Heart left ventricle (tissue), 16 donors: ENCODE measurements at regions of chr12 and their contacts with region 1.

Region 1: DNA sequence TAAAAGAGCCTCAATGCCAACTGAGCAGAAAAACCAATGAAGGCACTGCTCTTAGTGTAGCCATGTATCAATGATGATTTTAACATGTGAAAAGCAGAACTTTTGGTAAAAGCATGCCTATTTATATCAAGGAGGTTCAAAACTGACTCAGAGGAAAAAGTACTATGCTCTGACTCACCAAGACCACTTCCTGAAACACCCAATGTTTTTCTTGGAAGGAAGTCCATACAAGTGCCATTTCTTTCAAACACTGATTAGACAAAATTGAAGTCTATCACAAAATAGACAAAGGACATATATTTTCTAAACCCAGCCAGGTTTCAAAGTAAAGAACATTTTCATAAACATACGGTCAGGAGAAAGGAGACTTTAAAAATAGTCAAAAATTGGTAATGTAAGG is 88.6 kb downstream of the EPS8 start:
- DNase-seq: no peak
- ATAC-seq: peak; percentile 63 to 91 (median 87)
- H3K4me3 ChIP-seq: no peak overlapping the region
- H3K27ac ChIP-seq: peak overlapping the region; percentile 35 to 89 (median 68)
- H3K4me1 ChIP-seq: peaks cover 0 to 73% (median 38%) of the 10 kb centered on the region in 12 donors
- H3K27me3 ChIP-seq: no peaks in the 10 kb centered on the region
- CTCF ChIP-seq: no peak
- POLR2A ChIP-seq: no peak

Region 2: DNA sequence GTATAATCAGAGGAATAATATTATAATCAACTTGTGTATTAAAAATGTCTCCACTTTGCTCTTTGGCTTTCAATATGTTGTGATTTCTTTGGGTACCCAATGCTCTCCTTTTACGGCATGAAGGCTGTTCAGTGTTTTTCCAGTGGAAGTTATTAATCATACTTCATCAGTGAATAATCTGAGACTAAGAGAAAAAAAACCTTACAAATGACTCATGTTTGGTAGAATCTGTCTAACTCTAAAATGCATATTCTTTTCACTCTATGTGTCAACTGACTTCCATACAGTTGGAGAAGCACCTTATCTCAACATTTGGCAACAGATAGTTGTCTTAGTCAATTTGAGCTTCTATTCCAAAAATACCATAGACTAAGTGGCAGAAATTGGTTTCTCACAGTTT is 296.1 kb before region 1 on chr12:
- intact Hi-C with region 1: no loop called
- DNase-seq: no peak
- ATAC-seq: no peak
- H3K4me3 ChIP-seq: no peak overlapping the region
- H3K27ac ChIP-seq: no peak overlapping the region
- H3K4me1 ChIP-seq: no peaks in the 10 kb centered on the region
- H3K27me3 ChIP-seq: no peaks in the 10 kb centered on the region
- CTCF ChIP-seq: no peak
- POLR2A ChIP-seq: no peak

Region 3: DNA sequence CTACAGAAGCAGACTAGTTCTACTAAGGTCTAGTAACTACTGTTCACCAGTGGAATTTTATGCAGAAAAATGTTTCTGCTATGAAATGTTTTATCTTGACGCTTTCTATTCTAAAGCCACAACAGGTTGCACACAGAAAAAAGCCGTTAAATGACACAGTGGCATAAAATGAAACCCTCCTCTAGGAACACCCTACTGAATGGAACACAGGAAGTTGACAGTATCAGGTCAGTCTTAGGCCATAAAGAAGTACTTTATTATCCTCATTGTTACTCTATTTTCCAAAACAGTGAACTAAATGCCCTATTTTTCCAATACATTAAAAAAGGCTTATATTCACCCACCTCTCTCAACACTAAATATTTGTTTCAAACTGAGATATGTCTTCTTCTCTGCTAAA is 66.7 kb after region 1 on chr12:
- intact Hi-C with region 1: loop called in 1 of 10 experiments (anchors 5 kb)
- DNase-seq: no peak
- ATAC-seq: no peak
- H3K4me3 ChIP-seq: no peak overlapping the region
- H3K27ac ChIP-seq: peak overlapping the region in 2 of 12 donors; percentile 11 to 12
- H3K4me1 ChIP-seq: peaks cover 0 to 77% (median 4%) of the 10 kb centered on the region in 12 donors
- H3K27me3 ChIP-seq: no peaks in the 10 kb centered on the region
- CTCF ChIP-seq: no peak
- POLR2A ChIP-seq: no peak